ENCODE measurements at regions of chr3 and their contacts with region 1.

Region 1: GRCh38 chr3:2354702-2355101 is 256.0 kb downstream of the CNTN4 start:
- DNase-seq: no peak

Region 2: GRCh38 chr3:2452249-2452648 is 97.5 kb after region 1 on chr3:
- intact Hi-C with region 1: loop called (anchors 10 kb)
- DNase-seq: no peak